ENCODE measurements at regions of chr10 and their contacts with region 1.

Region 1: GRCh38 chr10:79374312-79375191 is 27.3 kb downstream of the PPIF start:
- DNase-seq: peak; percentile 56 to 80 (median 65)
- H3K4me3 ChIP-seq: no peak overlapping the region
- H3K4me3 Mint-ChIP-seq: no peak overlapping the region
- H3K27ac ChIP-seq: no peak overlapping the region
- H3K27ac Mint-ChIP-seq: peak overlapping the region in 1 of 8 donors; percentile 53
- H3K4me1 ChIP-seq: peaks cover 5% of the 10 kb centered on the region
- H3K4me1 Mint-ChIP-seq: peaks cover 0 to 4% (median 3%) of the 10 kb centered on the region in 3 donors
- H3K27me3 ChIP-seq: no peaks in the 10 kb centered on the region
- H3K27me3 Mint-ChIP-seq: peaks cover 0 to 4% of the 10 kb centered on the region in 2 donors

Region 2: DNA sequence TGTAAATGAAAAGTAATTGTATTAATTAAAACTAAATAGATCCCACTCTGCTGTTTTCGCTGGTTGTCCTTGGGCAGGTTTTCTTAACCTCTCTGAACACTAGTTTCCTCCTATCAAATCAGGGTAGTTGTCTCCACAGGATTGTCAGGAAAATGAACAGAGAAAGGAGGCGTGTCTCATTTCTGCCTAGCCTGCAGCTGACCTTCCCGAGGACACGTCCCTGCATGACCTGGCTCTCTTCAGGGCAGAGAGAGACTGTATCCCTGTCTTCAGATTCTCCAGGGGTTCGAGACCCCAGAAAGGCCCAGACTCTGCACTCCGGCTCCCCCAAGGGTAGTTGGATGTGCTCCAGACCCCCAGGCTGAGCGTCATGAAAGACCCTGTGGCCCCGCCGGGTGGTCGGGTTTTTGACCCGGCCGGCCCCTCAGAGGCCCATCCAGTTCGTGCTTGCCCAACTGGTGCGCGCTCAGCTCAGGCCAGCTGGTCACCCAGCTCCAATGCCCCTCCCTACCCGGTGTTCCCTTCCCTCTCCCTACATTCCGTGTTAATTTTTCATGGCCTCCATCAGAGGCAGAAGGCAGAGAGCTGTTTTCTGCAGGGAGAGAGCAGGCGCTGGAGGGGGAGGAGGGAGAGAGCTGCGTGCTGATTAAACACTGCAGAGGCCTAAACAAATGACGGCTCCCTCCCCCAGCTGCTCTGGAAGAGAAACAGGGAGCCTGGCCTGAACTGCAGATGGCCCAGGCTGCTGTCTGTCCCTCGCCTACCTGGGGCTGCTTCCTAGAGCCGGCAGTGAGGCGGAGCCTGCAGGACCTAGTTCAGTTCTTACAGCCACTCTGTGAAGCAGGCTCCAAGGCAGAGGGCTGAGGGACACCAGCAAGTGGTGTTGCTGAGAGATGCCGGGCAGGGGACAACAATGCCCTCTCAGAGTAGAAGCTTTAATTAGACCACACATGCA is 113.5 kb before region 1 on chr10:
- CTCF ChIA-PET with region 1: no interaction called
- POLR2A ChIA-PET with region 1: no interaction called
- DNase-seq: no peak
- H3K4me3 ChIP-seq: no peak overlapping the region
- H3K4me3 Mint-ChIP-seq: no peak overlapping the region
- H3K27ac ChIP-seq: no peak overlapping the region
- H3K27ac Mint-ChIP-seq: peak overlapping the region in 5 of 8 donors; percentile 42 to 84 (median 58)
- H3K4me1 ChIP-seq: peaks cover 3% of the 10 kb centered on the region
- H3K4me1 Mint-ChIP-seq: peaks cover 26 to 61% (median 27%) of the 10 kb centered on the region in 3 donors
- H3K27me3 ChIP-seq: no peaks in the 10 kb centered on the region
- H3K27me3 Mint-ChIP-seq: no peaks in the 10 kb centered on the region

Region 3: GRCh38 chr10:79275431-79275851 is 99.1 kb before region 1 on chr10:
- CTCF ChIA-PET with region 1: no interaction called
- POLR2A ChIA-PET with region 1: no interaction called
- DNase-seq: no peak
- H3K4me3 ChIP-seq: no peak overlapping the region
- H3K4me3 Mint-ChIP-seq: no peak overlapping the region
- H3K27ac ChIP-seq: no peak overlapping the region
- H3K27ac Mint-ChIP-seq: peak overlapping the region in 1 of 8 donors; percentile 72
- H3K4me1 ChIP-seq: no peaks in the 10 kb centered on the region
- H3K4me1 Mint-ChIP-seq: peaks cover 2 to 11% (median 7%) of the 10 kb centered on the region in 3 donors
- H3K27me3 ChIP-seq: no peaks in the 10 kb centered on the region
- H3K27me3 Mint-ChIP-seq: no peaks in the 10 kb centered on the region

Region 4: DNA sequence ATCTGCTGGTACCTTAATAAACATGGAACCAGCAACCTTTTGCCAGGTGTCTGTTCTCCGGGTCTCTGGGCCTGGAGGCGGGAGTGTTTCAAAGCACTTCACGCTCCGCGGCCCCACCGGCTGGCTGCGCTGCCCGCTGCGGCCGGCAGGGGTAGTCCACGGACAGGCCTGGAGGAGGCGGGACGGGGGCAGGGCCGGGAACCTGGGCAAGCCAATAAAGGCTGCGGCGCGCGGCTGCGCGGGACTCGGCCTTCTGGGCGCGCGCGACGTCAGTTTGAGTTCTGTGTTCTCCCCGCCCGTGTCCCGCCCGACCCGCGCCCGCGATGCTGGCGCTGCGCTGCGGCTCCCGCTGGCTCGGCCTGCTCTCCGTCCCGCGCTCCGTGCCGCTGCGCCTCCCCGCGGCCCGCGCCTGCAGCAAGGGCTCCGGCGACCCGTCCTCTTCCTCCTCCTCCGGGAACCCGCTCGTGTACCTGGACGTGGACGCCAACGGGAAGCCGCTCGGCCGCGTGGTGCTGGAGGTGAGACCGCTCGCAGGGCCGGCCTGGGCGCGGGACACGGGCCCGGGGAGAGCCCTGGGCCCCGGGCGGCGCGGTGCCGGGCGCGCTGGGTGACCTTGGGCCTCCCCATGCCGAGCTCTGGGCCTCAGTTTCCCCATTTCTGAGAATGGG is 27.2 kb before region 1 on chr10 and contains the start of gene PPIF:
- CTCF ChIA-PET with region 1: interaction called, 17 read pairs
- POLR2A ChIA-PET with region 1: no interaction called
- DNase-seq: peak; percentile 88 to 92 (median 89)
- H3K4me3 ChIP-seq: peak within 1 kb of the TSS; percentile 56
- H3K4me3 Mint-ChIP-seq: peak within 1 kb of the TSS; percentile 77 to 91 (median 82)
- H3K27ac ChIP-seq: peak within 1 kb of the TSS; percentile 80
- H3K27ac Mint-ChIP-seq: peak within 1 kb of the TSS; percentile 78 to 98 (median 92)
- H3K4me1 ChIP-seq: peaks cover 33% of the 10 kb centered on the region
- H3K4me1 Mint-ChIP-seq: peaks cover 25 to 46% (median 28%) of the 10 kb centered on the region in 3 donors
- H3K27me3 ChIP-seq: no peaks in the 10 kb centered on the region
- H3K27me3 Mint-ChIP-seq: no peaks in the 10 kb centered on the region
- total RNA-seq, gene PPIF: 173 to 181 TPM

Region 5: DNA sequence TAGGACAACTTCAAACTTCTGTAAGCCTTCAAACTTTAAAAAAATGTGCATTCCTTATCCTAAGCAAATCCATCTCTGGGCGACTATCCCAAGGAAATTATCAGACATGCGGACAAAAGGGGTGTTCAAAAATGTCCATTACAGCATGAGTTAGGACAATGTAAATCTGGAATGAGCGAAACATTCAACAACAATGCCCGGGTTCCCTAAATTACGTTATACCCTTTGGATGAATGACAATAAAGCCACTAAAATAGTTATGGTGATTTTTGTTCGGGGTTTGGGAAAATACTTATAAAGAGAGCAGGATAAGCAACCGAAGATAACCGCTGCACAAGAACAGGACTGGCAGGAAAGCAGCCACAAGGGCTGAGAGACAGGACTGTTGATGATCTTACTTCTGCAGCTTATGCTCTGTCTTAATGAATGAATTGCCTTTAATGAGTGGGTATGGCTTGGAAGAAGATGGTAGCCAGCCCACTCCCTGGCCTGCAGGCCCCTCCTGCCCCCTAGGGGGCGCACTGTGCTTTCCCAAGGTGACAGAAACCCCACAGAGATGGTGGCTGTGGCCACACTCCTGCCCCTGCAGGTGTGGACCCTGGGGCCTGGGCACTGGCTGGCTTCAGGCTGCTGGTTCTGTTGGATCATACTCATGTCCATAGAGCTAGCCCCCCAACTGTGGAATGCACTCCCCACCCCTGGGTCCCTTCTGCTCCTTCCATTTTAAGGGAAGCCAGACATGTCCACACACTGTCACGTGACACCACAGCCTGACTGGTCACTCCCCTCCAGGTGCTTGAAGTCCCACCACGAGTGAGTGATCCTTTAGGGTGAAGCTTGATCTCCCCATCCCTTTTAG is 25.8 kb after region 1 on chr10:
- CTCF ChIA-PET with region 1: interaction called, 16 read pairs
- POLR2A ChIA-PET with region 1: no interaction called
- DNase-seq: peak; percentile 11 to 65 (median 28)
- H3K4me3 ChIP-seq: no peak overlapping the region
- H3K4me3 Mint-ChIP-seq: no peak overlapping the region
- H3K27ac ChIP-seq: no peak overlapping the region
- H3K27ac Mint-ChIP-seq: peak overlapping the region in 1 of 8 donors; percentile 38
- H3K4me1 ChIP-seq: no peaks in the 10 kb centered on the region
- H3K4me1 Mint-ChIP-seq: no peaks in the 10 kb centered on the region
- H3K27me3 ChIP-seq: no peaks in the 10 kb centered on the region
- H3K27me3 Mint-ChIP-seq: peaks cover 0 to 2% of the 10 kb centered on the region in 2 donors

Region 6: DNA sequence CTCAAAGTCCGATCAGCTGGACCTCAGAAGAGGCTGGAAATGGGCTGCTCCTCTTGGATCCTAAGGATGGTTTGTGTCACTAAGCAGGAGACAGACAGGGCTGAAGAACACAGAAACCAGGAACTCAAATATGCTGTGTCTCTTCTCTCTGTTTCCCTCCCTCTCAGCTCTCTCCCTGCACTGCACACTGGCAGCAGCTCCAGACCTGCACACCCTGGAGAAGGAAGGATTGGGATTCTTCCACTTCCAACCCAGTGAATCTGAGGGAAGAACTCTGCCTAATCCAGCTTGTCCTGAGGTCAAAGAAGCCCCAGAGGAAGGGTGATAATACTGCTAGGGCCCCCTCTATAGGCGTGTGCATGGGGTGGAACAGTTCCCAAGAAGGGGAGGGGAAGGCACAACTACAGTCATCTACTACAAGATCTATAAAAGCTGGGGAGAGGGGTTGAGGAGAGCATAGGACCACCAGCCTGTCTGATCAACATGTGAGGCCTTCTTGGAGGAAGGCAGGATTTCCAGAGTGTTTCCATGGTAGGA is 93.5 kb after region 1 on chr10:
- CTCF ChIA-PET with region 1: interaction called, 59 read pairs
- POLR2A ChIA-PET with region 1: no interaction called
- DNase-seq: no peak
- H3K4me3 ChIP-seq: no peak overlapping the region
- H3K4me3 Mint-ChIP-seq: no peak overlapping the region
- H3K27ac ChIP-seq: no peak overlapping the region
- H3K27ac Mint-ChIP-seq: peak overlapping the region in 1 of 8 donors; percentile 29
- H3K4me1 ChIP-seq: no peaks in the 10 kb centered on the region
- H3K4me1 Mint-ChIP-seq: no peaks in the 10 kb centered on the region
- H3K27me3 ChIP-seq: no peaks in the 10 kb centered on the region
- H3K27me3 Mint-ChIP-seq: peaks cover 0 to 13% of the 10 kb centered on the region in 2 donors

Region 7: GRCh38 chr10:79487296-79488194 is 113.0 kb after region 1 on chr10:
- CTCF ChIA-PET with region 1: interaction called, 15 read pairs
- POLR2A ChIA-PET with region 1: no interaction called
- DNase-seq: peak in 1 of 5 donors; percentile 15
- H3K4me3 ChIP-seq: no peak overlapping the region
- H3K4me3 Mint-ChIP-seq: no peak overlapping the region
- H3K27ac ChIP-seq: no peak overlapping the region
- H3K27ac Mint-ChIP-seq: no peak overlapping the region
- H3K4me1 ChIP-seq: no peaks in the 10 kb centered on the region
- H3K4me1 Mint-ChIP-seq: no peaks in the 10 kb centered on the region
- H3K27me3 ChIP-seq: no peaks in the 10 kb centered on the region
- H3K27me3 Mint-ChIP-seq: peaks cover 0 to 6% of the 10 kb centered on the region in 2 donors

Measured in CD8-positive, alpha-beta memory T cell (primary cell).